GM12878 (cell line): ENCODE measurements at regions of chr3 and their contacts with region 1.

Region 1: GRCh38 chr3:50611464-50612233 is at the start of gene CISH:
- DNase-seq: no peak
- ATAC-seq: peak; percentile 88
- H3K4me3 ChIP-seq: peak within 1 kb of the TSS; percentile 85
- H3K27ac ChIP-seq: peak within 1 kb of the TSS; percentile 61
- H3K4me1 ChIP-seq: peaks cover 19% of the 10 kb centered on the region
- H3K27me3 ChIP-seq: no peaks in the 10 kb centered on the region
- CTCF ChIP-seq: peak; percentile 35 to 61 (median 52)
- EP300 ChIP-seq: no peak
- POLR2A ChIP-seq: peak; percentile 86
- RAD21 ChIP-seq: no peak
- polyA plus RNA-seq, gene CISH: 0.21 to 0.57 TPM

Region 2: GRCh38 chr3:49906004-49906743 is 705.5 kb before region 1 on chr3:
- CTCF ChIA-PET with region 1: no interaction called
- POLR2A ChIA-PET with region 1: no interaction called
- RAD21 ChIA-PET with region 1: no interaction called
- SMC1A ChIA-PET with region 1: no interaction called
- in situ Hi-C with region 1: no loop called
- intact Hi-C with region 1: no loop called
- DNase-seq: no peak
- ATAC-seq: peak; percentile 72
- H3K4me3 ChIP-seq: 0 out of 2 replicates have a peak overlapping the region, but pooled peaks have one; percentile 3
- H3K27ac ChIP-seq: peak overlapping the region; percentile 46
- H3K4me1 ChIP-seq: peaks cover 25% of the 10 kb centered on the region
- H3K27me3 ChIP-seq: no peaks in the 10 kb centered on the region
- CTCF ChIP-seq: peak; percentile 66 to 77 (median 71); a peak in 5 of 6 replicates
- EP300 ChIP-seq: no peak
- POLR2A ChIP-seq: no peak
- RAD21 ChIP-seq: peak; percentile 72

Region 3: GRCh38 chr3:50519471-50520089 is 92.1 kb before region 1 on chr3:
- CTCF ChIA-PET with region 1: interaction called, 4 read pairs
- POLR2A ChIA-PET with region 1: no interaction called
- RAD21 ChIA-PET with region 1: interaction called, 5 read pairs
- SMC1A ChIA-PET with region 1: interaction called, 4 read pairs
- in situ Hi-C with region 1: loop called (anchors 5 kb)
- intact Hi-C with region 1: loop called (anchors 1 kb)
- DNase-seq: no peak
- ATAC-seq: peak; percentile 89
- H3K4me3 ChIP-seq: no peak overlapping the region
- H3K27ac ChIP-seq: no peak overlapping the region
- H3K4me1 ChIP-seq: no peaks in the 10 kb centered on the region
- H3K27me3 ChIP-seq: peaks cover 0 to 1% of the 10 kb centered on the region in 2 experiments
- CTCF ChIP-seq: peak; percentile 87 to 97 (median 96)
- EP300 ChIP-seq: no peak
- POLR2A ChIP-seq: no peak
- RAD21 ChIP-seq: peak; percentile 62

Region 4: GRCh38 chr3:50587806-50588758 is 23.6 kb before region 1 on chr3:
- CTCF ChIA-PET with region 1: interaction called, 317 read pairs
- POLR2A ChIA-PET with region 1: interaction called, 54 read pairs
- RAD21 ChIA-PET with region 1: interaction called, 135 read pairs
- SMC1A ChIA-PET with region 1: interaction called, 186 read pairs
- in situ Hi-C with region 1: no loop called
- intact Hi-C with region 1: loop called (anchors 1 kb)
- DNase-seq: peak; percentile 32
- ATAC-seq: peak; percentile 72
- H3K4me3 ChIP-seq: no peak overlapping the region
- H3K27ac ChIP-seq: peak overlapping the region; percentile 51
- H3K4me1 ChIP-seq: peaks cover 35% of the 10 kb centered on the region
- H3K27me3 ChIP-seq: no peaks in the 10 kb centered on the region
- CTCF ChIP-seq: no peak
- EP300 ChIP-seq: no peak
- POLR2A ChIP-seq: peak; percentile 5
- RAD21 ChIP-seq: no peak

Region 5: GRCh38 chr3:50652709-50653108 is 41.1 kb after region 1 on chr3:
- CTCF ChIA-PET with region 1: interaction called, 250 read pairs
- POLR2A ChIA-PET with region 1: interaction called, 3 read pairs
- RAD21 ChIA-PET with region 1: interaction called, 84 read pairs
- SMC1A ChIA-PET with region 1: interaction called, 81 read pairs
- in situ Hi-C with region 1: no loop called
- intact Hi-C with region 1: loop called (anchors 1 kb)
- DNase-seq: peak; percentile 5
- ATAC-seq: peak; percentile 89
- H3K4me3 ChIP-seq: no peak overlapping the region
- H3K27ac ChIP-seq: no peak overlapping the region
- H3K4me1 ChIP-seq: no peaks in the 10 kb centered on the region
- H3K27me3 ChIP-seq: no peaks in the 10 kb centered on the region; a peak in 2 of 4 replicates
- CTCF ChIP-seq: peak; percentile 57 to 61 (median 59)
- EP300 ChIP-seq: no peak
- POLR2A ChIP-seq: no peak
- RAD21 ChIP-seq: peak; percentile 71

Region 6: GRCh38 chr3:51311055-51311454 is 699.4 kb after region 1 on chr3:
- CTCF ChIA-PET with region 1: interaction called, 7 read pairs
- POLR2A ChIA-PET with region 1: no interaction called
- RAD21 ChIA-PET with region 1: interaction called, 4 read pairs
- SMC1A ChIA-PET with region 1: interaction called, 8 read pairs
- in situ Hi-C with region 1: no loop called
- intact Hi-C with region 1: loop called (anchors 2 kb)
- DNase-seq: no peak
- ATAC-seq: peak; percentile 60
- H3K4me3 ChIP-seq: no peak overlapping the region
- H3K27ac ChIP-seq: no peak overlapping the region
- H3K4me1 ChIP-seq: no peaks in the 10 kb centered on the region
- H3K27me3 ChIP-seq: no peaks in the 10 kb centered on the region; a peak in 1 of 4 replicates
- CTCF ChIP-seq: peak; percentile 33 to 44 (median 35); a peak in 4 of 6 replicates
- EP300 ChIP-seq: no peak
- POLR2A ChIP-seq: no peak
- RAD21 ChIP-seq: peak; percentile 54

Region 7: GRCh38 chr3:51384726-51385473 is 773.3 kb after region 1 on chr3 and contains the start of gene MANF:
- CTCF ChIA-PET with region 1: interaction called, 17 read pairs
- POLR2A ChIA-PET with region 1: interaction called, 3 read pairs
- RAD21 ChIA-PET with region 1: interaction called, 6 read pairs
- SMC1A ChIA-PET with region 1: interaction called, 3 read pairs
- in situ Hi-C with region 1: no loop called
- intact Hi-C with region 1: loop called (anchors 2 kb)
- DNase-seq: peak; percentile 93
- ATAC-seq: peak; percentile 97
- H3K4me3 ChIP-seq: peak within 1 kb of the TSS; percentile 96
- H3K27ac ChIP-seq: peak within 1 kb of the TSS; percentile 86
- H3K4me1 ChIP-seq: peaks cover 16% of the 10 kb centered on the region
- H3K27me3 ChIP-seq: no peaks in the 10 kb centered on the region
- CTCF ChIP-seq: peak in 1 of 3 experiments; percentile 6; a peak in 1 of 6 replicates
- EP300 ChIP-seq: peak in 1 of 2 experiments; percentile 13; a peak in 1 of 4 replicates
- POLR2A ChIP-seq: peak; percentile 98
- RAD21 ChIP-seq: no peak
- polyA plus RNA-seq, gene MANF: 22.0 to 68.0 TPM